CD4-positive, alpha-beta T cell (primary cell): ENCODE measurements at regions of chr17 and their contacts with region 1.

Region 1: DNA sequence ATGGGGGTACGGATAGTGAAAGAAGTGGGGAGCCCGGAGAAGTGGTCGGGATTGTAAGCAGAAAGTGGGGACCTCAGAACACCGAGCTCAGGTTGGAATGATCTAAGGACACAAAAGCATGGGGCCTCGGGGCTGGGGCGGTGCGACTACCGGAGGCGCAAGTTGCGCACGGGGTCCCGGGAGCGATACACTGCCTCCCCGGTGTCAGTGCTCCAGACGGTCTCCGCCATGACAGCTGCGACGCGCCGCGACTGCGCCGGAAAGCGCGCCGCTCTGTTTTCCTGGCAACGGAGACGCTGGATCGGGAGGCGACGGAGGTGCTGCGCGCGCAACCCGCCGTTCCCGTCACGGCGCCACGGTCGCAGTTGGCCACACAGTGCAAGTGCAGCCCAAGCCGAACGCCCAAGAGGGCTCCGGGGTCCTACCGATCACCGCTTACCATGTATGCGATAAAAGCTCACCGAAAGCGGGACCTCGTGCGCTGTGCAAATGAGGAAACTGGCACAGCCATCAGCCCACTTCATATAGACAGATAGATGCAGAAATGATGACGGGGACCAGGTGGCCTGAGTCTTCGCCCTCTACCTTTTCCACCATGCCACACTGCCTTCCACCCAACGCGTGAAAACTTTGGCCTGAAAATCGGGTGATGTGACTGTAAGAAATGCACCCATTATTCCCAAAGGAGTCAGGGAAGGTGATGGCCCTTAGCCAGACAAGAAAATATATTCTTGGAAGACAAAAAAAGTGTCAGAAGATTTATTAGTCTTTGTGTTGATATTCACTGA is at the start of gene MKS1:
- DNase-seq: peak; percentile 92 to 97 (median 95)
- ATAC-seq: peak; percentile 97
- H3K4me3 ChIP-seq: peak within 1 kb of the TSS; percentile 88
- H3K4me3 Mint-ChIP-seq: peak within 1 kb of the TSS; percentile 90
- H3K27ac ChIP-seq: peak within 1 kb of the TSS; percentile 62 to 79
- H3K27ac Mint-ChIP-seq: peak within 1 kb of the TSS; percentile 90
- H3K4me1 ChIP-seq: peaks cover 16% of the 10 kb centered on the region
- H3K4me1 Mint-ChIP-seq: peaks cover 25% of the 10 kb centered on the region
- H3K27me3 ChIP-seq: no peaks in the 10 kb centered on the region
- H3K27me3 Mint-ChIP-seq: no peaks in the 10 kb centered on the region
- CTCF ChIP-seq: peak; percentile 78
- total RNA-seq, gene MKS1: 4.6 to 6.4 TPM

Region 2: DNA sequence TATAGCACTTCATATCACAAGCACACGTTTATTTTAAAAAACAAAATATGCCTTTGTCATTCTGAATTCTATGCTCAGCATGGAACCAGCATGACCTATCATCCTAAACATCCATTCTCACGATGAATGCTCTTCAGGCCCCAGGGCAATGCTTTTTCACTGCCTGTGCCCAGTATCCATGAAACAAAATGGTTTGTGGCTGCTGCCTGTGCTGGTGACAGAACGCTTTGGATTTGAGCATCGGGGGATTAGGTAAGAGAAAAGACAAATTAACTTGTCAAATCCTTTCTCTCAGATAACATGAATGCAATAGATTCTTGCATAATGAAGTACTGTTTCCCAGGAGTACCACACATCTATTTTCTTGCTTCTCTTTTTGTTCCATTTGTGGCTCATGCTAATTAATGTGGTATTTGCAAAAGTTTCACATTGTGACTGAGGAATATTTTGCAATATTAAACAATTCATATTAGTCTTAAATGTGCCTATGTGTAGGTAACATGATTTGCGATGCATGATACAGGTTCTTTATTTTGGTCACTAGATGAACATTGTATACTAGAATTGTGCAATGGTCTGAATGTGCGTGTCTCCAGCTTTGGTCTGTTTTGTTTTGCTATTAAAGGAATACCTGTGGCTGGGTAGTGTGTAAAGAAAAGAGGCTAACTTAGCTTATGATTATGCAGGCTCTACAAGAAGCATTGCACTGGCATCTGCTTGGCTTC is 186.3 kb before region 1 on chr17:
- CTCF ChIA-PET with region 1: no interaction called
- POLR2A ChIA-PET with region 1: no interaction called
- intact Hi-C with region 1: no loop called
- DNase-seq: no peak
- ATAC-seq: no peak
- H3K4me3 ChIP-seq: no peak overlapping the region
- H3K4me3 Mint-ChIP-seq: no peak overlapping the region
- H3K27ac ChIP-seq: no peak overlapping the region
- H3K27ac Mint-ChIP-seq: no peak overlapping the region
- H3K4me1 ChIP-seq: no peaks in the 10 kb centered on the region
- H3K4me1 Mint-ChIP-seq: no peaks in the 10 kb centered on the region
- H3K27me3 ChIP-seq: peaks cover 0 to 4% of the 10 kb centered on the region in 2 experiments
- H3K27me3 Mint-ChIP-seq: peaks cover 41% of the 10 kb centered on the region
- CTCF ChIP-seq: no peak

Region 3: DNA sequence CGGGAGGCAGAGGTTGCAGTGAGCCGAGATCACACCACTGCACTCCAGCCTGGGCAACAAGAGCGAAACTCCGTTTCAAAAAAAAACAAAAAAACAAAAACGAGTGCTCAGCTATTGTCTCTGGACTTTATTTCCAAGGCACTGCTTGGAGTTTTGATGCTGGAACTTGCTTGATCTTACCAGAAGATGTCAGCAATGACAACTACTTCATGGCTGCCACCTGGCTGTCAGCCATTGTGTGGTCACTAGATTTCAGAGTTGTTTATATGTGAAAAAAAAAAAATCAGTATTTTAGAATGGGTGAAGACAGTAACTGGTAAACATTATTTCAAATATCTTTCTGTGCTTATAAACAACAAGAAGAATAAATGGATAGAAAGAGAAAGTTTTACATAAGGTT is 97.3 kb before region 1 on chr17:
- CTCF ChIA-PET with region 1: no interaction called
- POLR2A ChIA-PET with region 1: interaction called, 3 read pairs
- intact Hi-C with region 1: loop called in 1 of 2 experiments (anchors 1 kb)
- DNase-seq: peak in 13 of 14 experiments; percentile 3 to 82 (median 38)
- ATAC-seq: peak; percentile 87
- H3K4me3 ChIP-seq: no peak overlapping the region
- H3K4me3 Mint-ChIP-seq: no peak overlapping the region
- H3K27ac ChIP-seq: no peak overlapping the region
- H3K27ac Mint-ChIP-seq: no peak overlapping the region
- H3K4me1 ChIP-seq: no peaks in the 10 kb centered on the region
- H3K4me1 Mint-ChIP-seq: peaks cover 15% of the 10 kb centered on the region
- H3K27me3 ChIP-seq: peaks cover 0 to 2% of the 10 kb centered on the region in 2 experiments
- H3K27me3 Mint-ChIP-seq: peaks cover 9% of the 10 kb centered on the region
- CTCF ChIP-seq: peak; percentile 82

Region 4: GRCh38 chr17:58156839-58157803 is 62.1 kb before region 1 on chr17:
- CTCF ChIA-PET with region 1: no interaction called
- POLR2A ChIA-PET with region 1: no interaction called
- intact Hi-C with region 1: loop called in 1 of 2 experiments (anchors 5 kb)
- DNase-seq: peak; percentile 28 to 82 (median 45)
- ATAC-seq: peak; percentile 50
- H3K4me3 ChIP-seq: peak overlapping the region; percentile 76
- H3K4me3 Mint-ChIP-seq: peak overlapping the region; percentile 91
- H3K27ac ChIP-seq: peak overlapping the region; percentile 75 to 86
- H3K27ac Mint-ChIP-seq: peak overlapping the region; percentile 92
- H3K4me1 ChIP-seq: peaks cover 55% of the 10 kb centered on the region
- H3K4me1 Mint-ChIP-seq: peaks cover 84% of the 10 kb centered on the region
- H3K27me3 ChIP-seq: no peaks in the 10 kb centered on the region
- H3K27me3 Mint-ChIP-seq: no peaks in the 10 kb centered on the region
- CTCF ChIP-seq: no peak

Region 5: DNA sequence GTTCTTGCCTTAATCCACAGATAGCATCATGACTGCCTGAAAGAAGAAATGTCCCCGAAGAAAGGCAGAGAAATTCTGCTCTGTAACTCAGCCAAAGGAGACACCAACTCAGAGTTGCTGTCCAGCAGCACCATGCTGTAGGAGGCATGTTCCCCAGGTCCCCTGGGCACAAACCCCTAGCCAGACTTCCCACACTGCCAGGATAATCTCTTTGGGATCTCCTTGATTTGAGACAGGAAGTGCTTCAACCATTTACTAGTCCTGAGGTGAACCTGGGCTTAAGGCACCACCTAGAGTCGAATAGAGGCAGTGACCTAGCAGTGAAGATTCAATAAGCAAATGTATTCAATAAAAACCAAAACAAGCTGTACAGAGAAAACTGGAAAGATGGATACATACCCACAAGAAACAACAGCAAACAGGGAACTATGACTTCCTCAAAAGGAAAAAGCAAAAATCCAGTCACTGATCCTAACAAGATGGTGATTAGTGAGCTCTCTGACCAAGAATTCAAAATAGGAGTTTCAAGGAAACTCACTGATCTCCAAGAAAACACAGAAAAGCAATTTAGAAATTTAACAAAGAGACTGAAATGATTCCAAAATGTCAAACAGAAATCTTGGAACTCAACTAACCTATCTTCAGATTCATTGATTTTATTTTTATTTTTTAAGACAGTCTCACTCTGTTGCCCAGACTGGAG is 46.7 kb before region 1 on chr17:
- CTCF ChIA-PET with region 1: no interaction called
- POLR2A ChIA-PET with region 1: interaction called, 4 read pairs
- intact Hi-C with region 1: loop called in 1 of 2 experiments (anchors 5 kb)
- DNase-seq: peak in 13 of 14 experiments; percentile 16 to 81 (median 31)
- ATAC-seq: peak; percentile 90
- H3K4me3 ChIP-seq: peak overlapping the region; percentile 4
- H3K4me3 Mint-ChIP-seq: no peak overlapping the region
- H3K27ac ChIP-seq: peak overlapping the region in 1 of 2 donors; percentile 57
- H3K27ac Mint-ChIP-seq: peak overlapping the region; percentile 31
- H3K4me1 ChIP-seq: peaks cover 43% of the 10 kb centered on the region
- H3K4me1 Mint-ChIP-seq: peaks cover 47% of the 10 kb centered on the region
- H3K27me3 ChIP-seq: no peaks in the 10 kb centered on the region
- H3K27me3 Mint-ChIP-seq: peaks cover 3% of the 10 kb centered on the region
- CTCF ChIP-seq: peak; percentile 87

Region 6: GRCh38 chr17:58249270-58250133 is 30.3 kb after region 1 on chr17:
- CTCF ChIA-PET with region 1: no interaction called
- POLR2A ChIA-PET with region 1: interaction called, 4 read pairs
- intact Hi-C with region 1: loop called (anchors 2 kb)
- DNase-seq: peak; percentile 54 to 86 (median 66)
- ATAC-seq: peak; percentile 95
- H3K4me3 ChIP-seq: peak overlapping the region; percentile 56
- H3K4me3 Mint-ChIP-seq: peak overlapping the region; percentile 74
- H3K27ac ChIP-seq: no peak overlapping the region
- H3K27ac Mint-ChIP-seq: no peak overlapping the region
- H3K4me1 ChIP-seq: peaks cover 18% of the 10 kb centered on the region
- H3K4me1 Mint-ChIP-seq: peaks cover 11% of the 10 kb centered on the region
- H3K27me3 ChIP-seq: peaks cover 5 to 8% of the 10 kb centered on the region in 2 experiments
- H3K27me3 Mint-ChIP-seq: peaks cover 34% of the 10 kb centered on the region
- CTCF ChIP-seq: peak; percentile 98

Region 7: GRCh38 chr17:58344047-58344790 is 125.0 kb after region 1 on chr17:
- CTCF ChIA-PET with region 1: no interaction called
- POLR2A ChIA-PET with region 1: interaction called, 8 read pairs
- intact Hi-C with region 1: loop called in 1 of 2 experiments (anchors 5 kb)
- DNase-seq: peak in 13 of 14 experiments; percentile 56 to 97 (median 77)
- ATAC-seq: peak; percentile 71
- H3K4me3 ChIP-seq: peak overlapping the region; percentile 67
- H3K4me3 Mint-ChIP-seq: peak overlapping the region; percentile 84
- H3K27ac ChIP-seq: peak overlapping the region; percentile 97 to 98
- H3K27ac Mint-ChIP-seq: peak overlapping the region; percentile 84
- H3K4me1 ChIP-seq: peaks cover 86% of the 10 kb centered on the region
- H3K4me1 Mint-ChIP-seq: peaks cover 99% of the 10 kb centered on the region
- H3K27me3 ChIP-seq: no peaks in the 10 kb centered on the region
- H3K27me3 Mint-ChIP-seq: no peaks in the 10 kb centered on the region
- CTCF ChIP-seq: no peak

Region 8: GRCh38 chr17:58493491-58493890 is 274.3 kb after region 1 on chr17:
- CTCF ChIA-PET with region 1: no interaction called
- POLR2A ChIA-PET with region 1: no interaction called
- intact Hi-C with region 1: no loop called
- DNase-seq: no peak
- ATAC-seq: no peak
- H3K4me3 ChIP-seq: no peak overlapping the region
- H3K4me3 Mint-ChIP-seq: no peak overlapping the region
- H3K27ac ChIP-seq: no peak overlapping the region
- H3K27ac Mint-ChIP-seq: no peak overlapping the region
- H3K4me1 ChIP-seq: peaks cover under 1% of the 10 kb centered on the region
- H3K4me1 Mint-ChIP-seq: peaks cover 6% of the 10 kb centered on the region
- H3K27me3 ChIP-seq: no peaks in the 10 kb centered on the region
- H3K27me3 Mint-ChIP-seq: no peaks in the 10 kb centered on the region
- CTCF ChIP-seq: no peak